Transverse colon (tissue), 4 donors: ENCODE measurements at regions of chr15 and their contacts with region 1.

Region 1: DNA sequence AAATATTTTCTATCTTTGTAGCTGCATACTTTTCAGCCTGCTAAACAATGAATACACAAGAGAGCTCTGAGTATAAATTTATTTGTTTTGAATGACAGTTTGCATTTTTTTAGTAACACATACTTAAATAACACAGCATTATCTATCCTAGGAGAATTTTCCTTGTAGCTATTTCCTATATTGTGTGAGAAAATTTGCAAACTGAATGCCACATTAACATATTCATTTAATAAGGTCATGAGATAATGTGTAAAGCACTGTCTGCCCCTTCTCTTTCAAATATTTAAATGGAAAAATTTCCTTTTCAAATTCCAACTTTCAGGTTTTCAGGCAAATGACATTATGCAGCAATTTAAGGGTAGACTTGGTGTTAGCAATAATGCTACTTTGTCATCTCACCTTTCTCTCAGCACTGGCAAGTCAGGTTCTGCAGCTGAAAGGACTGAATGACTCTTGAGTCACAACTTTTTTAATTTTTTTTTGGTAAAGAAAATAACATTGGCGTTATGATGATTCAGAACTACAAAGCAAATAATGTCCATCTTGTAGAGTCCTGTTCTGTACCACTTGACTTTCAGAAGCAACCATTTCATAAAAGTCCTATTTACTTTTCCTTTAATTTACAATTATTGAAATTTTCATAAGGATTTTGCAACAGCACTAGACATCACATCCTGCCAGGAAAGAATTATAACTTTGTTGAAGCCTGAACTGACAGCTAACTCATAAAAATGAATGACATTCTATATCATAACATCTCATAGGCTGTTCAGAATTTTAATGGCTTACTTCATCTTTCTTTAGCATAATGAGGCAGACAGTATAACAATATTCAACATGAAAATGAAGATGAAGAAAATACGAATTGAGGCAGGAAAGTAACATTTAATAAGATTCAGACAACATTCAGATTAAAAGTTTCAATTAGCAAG is 681.6 kb upstream of the SEMA6D start:
- DNase-seq: no peak
- H3K4me3 ChIP-seq: no peak overlapping the region
- H3K27ac ChIP-seq: no peak overlapping the region
- H3K4me1 ChIP-seq: no peaks in the 10 kb centered on the region
- H3K27me3 ChIP-seq: no peaks in the 10 kb centered on the region
- CTCF ChIP-seq: no peak
- EP300 ChIP-seq: no peak
- POLR2A ChIP-seq: no peak

Region 2: GRCh38 chr15:46961795-46962194 is 73.9 kb before region 1 on chr15:
- in situ Hi-C with region 1: no loop called
- intact Hi-C with region 1: no loop called
- DNase-seq: no peak
- H3K4me3 ChIP-seq: no peak overlapping the region
- H3K27ac ChIP-seq: no peak overlapping the region
- H3K4me1 ChIP-seq: no peaks in the 10 kb centered on the region
- H3K27me3 ChIP-seq: no peaks in the 10 kb centered on the region
- CTCF ChIP-seq: no peak
- EP300 ChIP-seq: peak; percentile 31
- POLR2A ChIP-seq: no peak

Region 3: GRCh38 chr15:47817969-47818548 is 782.3 kb after region 1 on chr15:
- in situ Hi-C with region 1: no loop called
- intact Hi-C with region 1: loop called (anchors 5 kb)
- DNase-seq: no peak
- H3K4me3 ChIP-seq: no peak overlapping the region
- H3K27ac ChIP-seq: no peak overlapping the region
- H3K4me1 ChIP-seq: peaks cover 0 to 7% (median 0%) of the 10 kb centered on the region in 4 donors
- H3K27me3 ChIP-seq: no peaks in the 10 kb centered on the region
- CTCF ChIP-seq: no peak
- EP300 ChIP-seq: no peak
- POLR2A ChIP-seq: no peak